OCI-LY7 (cell line): ENCODE measurements at regions of chr14 and their contacts with region 1.

Region 1: DNA sequence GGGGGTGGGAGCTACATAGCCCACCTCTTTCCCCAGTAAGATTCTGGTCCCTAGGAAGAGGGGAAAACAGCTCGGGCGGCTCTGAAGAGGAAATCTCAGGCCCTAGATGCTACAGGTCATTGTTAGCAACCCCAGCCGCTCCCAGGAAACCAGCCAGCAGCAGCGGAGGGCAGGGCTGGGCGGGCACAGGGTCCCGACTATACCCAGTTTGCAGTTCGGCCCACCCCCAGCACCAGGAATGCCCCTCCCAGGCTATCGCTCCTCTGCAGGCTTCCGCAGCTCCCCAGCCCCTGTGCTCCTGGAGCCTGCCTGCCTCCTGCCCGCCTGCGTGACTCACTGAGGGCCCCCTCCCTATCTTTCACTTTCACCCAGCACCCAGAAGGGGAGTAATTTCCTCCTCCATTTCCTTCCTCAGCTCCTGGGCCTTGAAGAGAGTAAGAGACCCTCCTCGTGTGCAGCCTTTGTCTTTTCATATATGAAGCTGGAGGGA is 27.2 kb upstream of the PNMA1 start:
- DNase-seq: peak; percentile 54
- H3K4me3 ChIP-seq: peak overlapping the region; percentile 58
- H3K27ac ChIP-seq: peak overlapping the region; percentile 70
- H3K4me1 ChIP-seq: peaks cover 58% of the 10 kb centered on the region
- CTCF ChIP-seq: no peak

Region 2: DNA sequence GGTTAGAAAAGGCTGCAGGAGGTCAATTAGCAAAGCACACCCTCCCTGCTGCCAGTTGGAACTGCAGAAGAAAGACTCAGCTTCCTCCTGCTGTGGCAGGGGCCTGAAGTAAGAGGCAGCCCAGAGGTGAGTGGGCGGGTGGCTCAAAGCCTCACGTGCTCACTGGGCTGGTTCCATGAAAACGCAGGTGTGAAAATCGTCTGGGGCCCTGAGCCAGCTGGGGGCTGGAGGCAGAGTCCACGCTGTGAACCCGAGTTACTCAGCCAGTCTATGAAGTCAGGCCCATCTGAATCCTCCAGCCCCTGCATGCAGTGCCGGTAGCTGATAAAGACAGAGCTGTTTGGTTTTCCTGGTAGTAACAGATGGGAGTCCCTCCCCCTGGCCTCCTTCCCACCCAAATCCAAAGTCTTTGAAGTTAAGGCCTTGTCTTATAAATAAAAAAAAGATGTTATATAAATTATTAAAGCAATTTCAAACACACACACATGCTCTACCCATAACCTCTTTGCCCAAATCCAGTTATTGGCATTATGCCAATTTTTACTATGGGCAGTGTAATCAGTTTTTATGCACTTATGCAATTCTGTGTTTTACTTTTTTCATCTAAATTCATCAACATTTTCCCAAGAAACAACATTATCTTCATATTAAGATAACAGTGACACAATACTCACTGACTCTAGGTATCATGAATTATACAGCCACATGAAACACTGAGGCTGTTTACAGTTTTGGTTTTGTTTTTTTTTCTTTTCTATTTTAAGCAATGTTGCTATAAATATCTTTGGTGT is 30.6 kb after region 1 on chr14:
- CTCF ChIA-PET with region 1: interaction called, 5 read pairs
- POLR2A ChIA-PET with region 1: interaction called, 17 read pairs
- intact Hi-C with region 1: loop called (anchors 2 kb)
- DNase-seq: peak; percentile 95
- H3K4me3 ChIP-seq: peak overlapping the region; percentile 49
- H3K27ac ChIP-seq: peak overlapping the region; percentile 96
- H3K4me1 ChIP-seq: peaks cover 100% of the 10 kb centered on the region
- CTCF ChIP-seq: no peak

Region 3: GRCh38 chr14:73973497-73973896 is 232.1 kb after region 1 on chr14:
- CTCF ChIA-PET with region 1: no interaction called
- POLR2A ChIA-PET with region 1: no interaction called
- intact Hi-C with region 1: no loop called
- DNase-seq: no peak
- H3K4me3 ChIP-seq: no peak overlapping the region
- H3K27ac ChIP-seq: no peak overlapping the region
- H3K4me1 ChIP-seq: no peaks in the 10 kb centered on the region
- CTCF ChIP-seq: no peak